Activated CD4-positive, alpha-beta memory T cell treated with anti-CD3 and anti-CD28 coated beads for 36 hours (primary cell): ENCODE measurements at regions of chr19 and their contacts with region 1.

Region 1: DNA sequence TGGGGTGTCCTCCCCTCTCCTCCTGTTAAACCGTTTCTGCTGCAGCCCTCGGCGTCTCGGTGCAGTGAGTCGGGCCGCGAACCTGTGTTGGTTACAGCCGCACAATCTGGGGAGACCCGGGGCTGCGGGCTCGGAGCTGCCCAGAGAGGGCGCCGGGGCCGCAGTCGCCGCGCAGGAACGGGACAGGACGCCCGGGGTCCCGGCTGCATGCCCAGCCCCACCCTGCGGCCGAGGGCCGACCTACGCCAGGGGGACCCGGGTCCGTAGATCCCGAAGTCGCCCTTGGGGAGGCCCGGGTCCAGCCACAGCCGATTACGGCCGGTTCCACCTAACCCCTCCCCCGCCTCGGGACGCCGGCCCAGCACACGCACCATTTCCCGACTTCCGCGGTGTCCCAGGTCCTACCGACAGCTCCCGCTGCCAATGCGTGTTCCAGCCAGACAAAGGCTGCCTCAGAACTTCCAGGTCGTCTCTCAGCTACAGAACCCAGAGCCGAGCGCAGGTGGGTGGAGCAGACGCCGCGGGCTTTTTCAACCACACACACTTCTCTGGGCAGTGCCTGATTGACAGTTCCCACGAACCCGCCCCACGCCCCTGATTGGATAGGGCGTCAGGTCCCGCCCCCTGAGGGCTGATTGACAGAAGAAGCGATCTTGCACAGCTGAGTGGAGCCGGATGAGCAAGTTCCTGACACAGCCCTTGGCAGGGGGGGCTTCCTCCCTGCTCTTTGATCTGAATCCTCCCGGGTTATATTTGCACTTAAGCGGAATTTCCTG is at the start of gene ZNF443:
- DNase-seq: peak; percentile 100
- H3K4me3 Mint-ChIP-seq: peak within 1 kb of the TSS; percentile 97
- H3K27ac Mint-ChIP-seq: peak within 1 kb of the TSS; percentile 92
- H3K4me1 Mint-ChIP-seq: peaks cover 11% of the 10 kb centered on the region
- H3K27me3 Mint-ChIP-seq: no peaks in the 10 kb centered on the region
- total RNA-seq, gene ZNF443: 5.1 to 5.3 TPM

Region 2: GRCh38 chr19:12294249-12295158 is 146.2 kb before region 1 on chr19 and contains the start of gene ZNF44:
- CTCF ChIA-PET with region 1: no interaction called
- POLR2A ChIA-PET with region 1: no interaction called
- intact Hi-C with region 1: loop called (anchors 1 kb)
- DNase-seq: peak; percentile 99
- H3K4me3 Mint-ChIP-seq: peak within 1 kb of the TSS; percentile 98
- H3K27ac Mint-ChIP-seq: peak within 1 kb of the TSS; percentile 98
- H3K4me1 Mint-ChIP-seq: peaks cover 27% of the 10 kb centered on the region
- H3K27me3 Mint-ChIP-seq: no peaks in the 10 kb centered on the region
- total RNA-seq, gene ZNF44: 7.5 to 8.9 TPM

Region 3: DNA sequence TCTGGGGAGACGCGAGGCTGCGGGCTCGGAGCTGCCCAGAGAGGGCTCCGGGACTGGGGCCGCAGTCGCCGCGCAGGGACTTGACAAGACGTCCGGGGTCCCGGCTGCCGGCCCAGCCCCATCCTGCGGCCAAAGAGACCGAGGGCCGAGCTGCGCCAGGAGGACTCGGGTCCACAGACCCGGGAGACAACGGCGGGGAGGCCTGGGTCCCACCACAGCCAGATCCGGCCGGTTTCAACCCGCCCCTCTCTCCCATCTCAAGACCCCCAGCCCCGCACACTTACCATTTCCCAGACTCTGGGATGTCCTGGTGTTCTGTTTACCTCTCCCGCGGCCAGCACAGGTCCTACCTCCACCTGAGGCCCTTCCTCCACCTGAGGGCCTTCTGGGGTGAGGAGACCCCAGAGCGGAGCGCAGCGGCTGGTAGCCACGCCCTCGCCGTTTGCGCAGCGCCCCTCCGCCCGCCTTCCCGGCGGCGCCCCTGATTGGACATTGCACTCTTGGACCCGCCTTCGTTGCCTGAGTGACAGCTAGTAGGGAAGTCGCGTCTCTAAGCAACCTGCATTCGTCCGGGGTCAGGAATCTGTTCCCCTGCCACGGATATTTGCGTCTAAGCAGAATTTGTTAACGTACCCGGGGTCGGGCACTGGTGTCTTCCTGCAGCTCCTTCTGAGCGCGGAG is 43.8 kb after region 1 on chr19 and contains the start of gene ZNF709:
- CTCF ChIA-PET with region 1: no interaction called
- POLR2A ChIA-PET with region 1: no interaction called
- intact Hi-C with region 1: loop called (anchors 5 kb)
- DNase-seq: peak; percentile 92
- H3K4me3 Mint-ChIP-seq: peak within 1 kb of the TSS; percentile 89
- H3K27ac Mint-ChIP-seq: peak within 1 kb of the TSS; percentile 43
- H3K4me1 Mint-ChIP-seq: peaks cover 29% of the 10 kb centered on the region
- H3K27me3 Mint-ChIP-seq: no peaks in the 10 kb centered on the region
- total RNA-seq, gene ZNF709: 1.5 to 2.4 TPM